Gastrocnemius medialis (tissue), 4 donors: ENCODE measurements at regions of chr17 and their contacts with region 1.

Region 1: GRCh38 chr17:31248986-31249834 is 47.8 kb downstream of the OMG start:
- DNase-seq: no peak
- ATAC-seq: no peak
- H3K4me3 ChIP-seq: no peak overlapping the region
- H3K27ac ChIP-seq: no peak overlapping the region
- H3K4me1 ChIP-seq: peaks cover 0 to 8% of the 10 kb centered on the region in 2 donors
- H3K27me3 ChIP-seq: no peaks in the 10 kb centered on the region
- CTCF ChIP-seq: no peak
- POLR2A ChIP-seq: no peak

Region 2: GRCh38 chr17:31339906-31340661 is 90.9 kb after region 1 on chr17:
- in situ Hi-C with region 1: loop called in 1 of 4 experiments (anchors 25 kb)
- intact Hi-C with region 1: no loop called
- DNase-seq: no peak
- ATAC-seq: no peak
- H3K4me3 ChIP-seq: no peak overlapping the region
- H3K27ac ChIP-seq: no peak overlapping the region
- H3K4me1 ChIP-seq: no peaks in the 10 kb centered on the region
- H3K27me3 ChIP-seq: no peaks in the 10 kb centered on the region
- CTCF ChIP-seq: no peak
- POLR2A ChIP-seq: no peak